ENCODE measurements at regions of chr2 and their contacts with region 1.

Region 1: GRCh38 chr2:179751163-179751809 is 110.1 kb downstream of the ZNF385B start:
- DNase-seq: peak; percentile 10
- ATAC-seq: no peak
- H3K4me3 ChIP-seq: no peak overlapping the region
- H3K27ac ChIP-seq: no peak overlapping the region
- H3K4me1 ChIP-seq: no peaks in the 10 kb centered on the region
- H3K27me3 ChIP-seq: no peaks in the 10 kb centered on the region
- CTCF ChIP-seq: peak; percentile 67

Region 2: DNA sequence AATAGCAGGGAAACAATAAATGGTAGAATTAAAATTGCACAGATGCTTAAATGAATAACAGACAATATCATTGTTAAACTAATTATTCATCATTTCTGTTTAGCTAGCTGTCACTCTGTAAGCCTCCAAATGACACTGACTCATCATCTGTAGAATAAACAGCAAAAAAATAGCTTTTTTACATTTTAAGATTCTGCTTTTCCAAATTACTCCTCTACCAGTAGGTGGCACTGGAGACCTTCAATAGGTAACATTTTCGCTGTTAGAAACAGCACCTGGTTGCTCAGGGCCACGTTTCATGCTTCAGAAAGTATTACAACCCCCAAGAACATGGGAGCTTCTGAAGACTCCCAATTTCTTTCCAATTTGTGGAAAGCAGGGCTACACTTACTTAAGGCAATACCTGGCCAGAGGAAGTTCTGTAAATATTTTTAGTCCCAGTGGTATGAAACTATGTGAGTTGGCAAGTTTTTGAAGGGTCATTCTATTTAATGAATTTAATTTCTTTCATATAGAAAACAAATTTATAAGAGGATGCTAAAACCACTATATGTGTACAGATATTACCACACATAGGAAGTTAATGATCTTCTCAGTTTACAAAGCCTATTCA is 989.4 kb before region 1 on chr2:
- CTCF ChIA-PET with region 1: no interaction called
- POLR2A ChIA-PET with region 1: no interaction called
- in situ Hi-C with region 1: no loop called
- intact Hi-C with region 1: loop called (anchors 10 kb)
- DNase-seq: peak; percentile 30
- ATAC-seq: no peak; the same call in 1 of the 2 replicates
- H3K4me3 ChIP-seq: no peak overlapping the region
- H3K27ac ChIP-seq: no peak overlapping the region
- H3K4me1 ChIP-seq: no peaks in the 10 kb centered on the region
- H3K27me3 ChIP-seq: peaks cover 2% of the 10 kb centered on the region
- CTCF ChIP-seq: peak; percentile 82

Region 3: GRCh38 chr2:178796079-178796677 is 955.1 kb before region 1 on chr2:
- CTCF ChIA-PET with region 1: no interaction called
- POLR2A ChIA-PET with region 1: no interaction called
- in situ Hi-C with region 1: no loop called
- intact Hi-C with region 1: loop called (anchors 10 kb)
- DNase-seq: peak; percentile 45
- ATAC-seq: no peak
- H3K4me3 ChIP-seq: no peak overlapping the region
- H3K27ac ChIP-seq: no peak overlapping the region
- H3K4me1 ChIP-seq: no peaks in the 10 kb centered on the region
- H3K27me3 ChIP-seq: no peaks in the 10 kb centered on the region
- CTCF ChIP-seq: peak; percentile 61; the same call in 1 of the 2 replicates

Region 4: DNA sequence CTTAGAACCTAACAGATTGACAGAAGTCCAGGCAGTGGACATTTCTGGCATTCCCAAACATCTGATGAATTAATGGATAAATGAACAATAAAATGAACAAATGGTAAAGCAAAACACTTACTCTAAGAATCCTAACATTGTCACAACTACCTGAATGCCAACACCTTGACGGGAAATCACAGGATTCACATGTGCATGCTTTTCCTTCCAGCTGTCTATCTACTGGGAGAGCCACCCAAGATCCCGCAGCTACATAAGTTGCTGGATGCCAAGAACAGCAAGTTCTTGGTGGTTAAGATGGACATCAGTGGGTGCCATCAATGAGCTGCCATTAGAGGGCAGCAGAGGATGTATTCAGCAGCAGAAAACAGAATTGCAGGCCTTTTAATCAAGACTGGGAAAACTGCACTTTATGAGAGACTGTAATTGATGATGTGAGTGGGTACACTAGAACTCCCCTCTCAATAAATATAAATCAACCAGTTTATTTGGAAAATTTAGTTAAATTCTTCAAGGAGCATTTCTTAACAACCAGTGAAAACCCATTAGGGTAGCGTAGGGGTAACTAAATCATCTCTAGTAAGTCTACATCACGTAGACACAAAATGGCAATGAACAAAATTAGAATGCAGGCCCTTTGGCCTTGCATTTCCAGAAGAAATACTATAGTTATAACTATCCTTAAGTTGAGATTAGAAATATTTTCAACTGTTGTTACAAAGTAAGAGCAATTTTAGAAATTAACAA is 532.3 kb before region 1 on chr2:
- CTCF ChIA-PET with region 1: no interaction called
- POLR2A ChIA-PET with region 1: no interaction called
- in situ Hi-C with region 1: no loop called
- intact Hi-C with region 1: loop called (anchors 5 kb)
- DNase-seq: peak; percentile 66
- ATAC-seq: peak; percentile 90
- H3K4me3 ChIP-seq: no peak overlapping the region
- H3K27ac ChIP-seq: no peak overlapping the region
- H3K4me1 ChIP-seq: no peaks in the 10 kb centered on the region
- H3K27me3 ChIP-seq: no peaks in the 10 kb centered on the region
- CTCF ChIP-seq: peak; percentile 91

Region 5: DNA sequence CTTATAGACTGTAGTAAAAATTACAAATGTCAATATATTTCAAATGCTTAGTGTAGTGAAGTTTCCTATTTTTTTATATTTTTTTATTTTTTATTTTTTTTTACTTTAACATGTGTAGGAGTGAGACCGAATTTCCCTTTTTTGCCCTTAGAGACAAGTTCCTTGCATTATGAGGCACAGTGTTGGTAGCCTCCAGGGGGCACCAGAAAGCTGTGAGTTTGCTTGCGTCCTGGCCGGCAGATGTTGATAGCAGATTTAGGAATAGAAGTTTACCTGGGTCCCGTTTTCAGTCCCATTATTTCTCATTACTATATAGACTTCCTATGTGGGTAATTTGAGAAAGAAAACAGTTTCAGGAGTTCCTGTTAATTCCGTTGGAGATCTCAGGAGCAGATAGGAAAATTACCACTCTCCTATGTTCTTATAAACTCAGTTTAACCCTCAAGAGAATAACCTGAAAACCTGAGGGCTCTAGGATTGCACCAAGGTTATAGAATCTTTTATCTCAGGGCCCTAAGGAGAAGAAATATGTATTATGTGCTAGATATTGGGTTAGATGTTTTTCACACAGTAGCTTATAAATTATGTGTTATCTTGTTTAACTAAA is 329.1 kb before region 1 on chr2:
- CTCF ChIA-PET with region 1: no interaction called
- POLR2A ChIA-PET with region 1: no interaction called
- in situ Hi-C with region 1: no loop called
- intact Hi-C with region 1: loop called (anchors 2 kb)
- DNase-seq: peak; percentile 30
- ATAC-seq: peak; percentile 84
- H3K4me3 ChIP-seq: no peak overlapping the region
- H3K27ac ChIP-seq: no peak overlapping the region
- H3K4me1 ChIP-seq: no peaks in the 10 kb centered on the region
- H3K27me3 ChIP-seq: no peaks in the 10 kb centered on the region
- CTCF ChIP-seq: peak; percentile 84